A673 (cell line): ENCODE measurements at regions of chr12 and their contacts with region 1.

Region 1: DNA sequence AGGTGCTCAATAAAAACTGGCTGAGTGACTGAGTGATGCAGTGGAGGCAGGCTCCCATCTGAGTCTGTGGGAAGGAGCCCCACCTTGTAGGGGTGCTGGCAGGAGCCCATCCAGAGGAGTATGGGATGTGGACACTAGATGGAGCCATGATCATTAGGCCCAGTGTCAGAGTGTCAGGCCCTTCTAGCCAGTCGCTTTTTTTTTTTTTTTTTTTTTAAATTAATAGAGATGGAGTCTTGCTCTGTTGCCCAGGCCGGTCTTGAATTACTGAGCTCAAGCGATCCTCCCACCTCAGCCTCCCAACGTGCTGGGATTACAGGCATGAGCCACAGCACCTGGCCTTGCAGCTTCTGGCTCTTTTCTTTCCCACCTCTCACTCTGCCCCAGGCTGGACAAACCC is 11.5 kb downstream of the RITA1 start:
- DNase-seq: peak; percentile 71
- H3K4me3 ChIP-seq: no peak overlapping the region
- H3K27ac ChIP-seq: no peak overlapping the region
- H3K4me1 ChIP-seq: no peaks in the 10 kb centered on the region
- H3K27me3 ChIP-seq: no peaks in the 10 kb centered on the region
- CTCF ChIP-seq: peak; percentile 64

Region 2: DNA sequence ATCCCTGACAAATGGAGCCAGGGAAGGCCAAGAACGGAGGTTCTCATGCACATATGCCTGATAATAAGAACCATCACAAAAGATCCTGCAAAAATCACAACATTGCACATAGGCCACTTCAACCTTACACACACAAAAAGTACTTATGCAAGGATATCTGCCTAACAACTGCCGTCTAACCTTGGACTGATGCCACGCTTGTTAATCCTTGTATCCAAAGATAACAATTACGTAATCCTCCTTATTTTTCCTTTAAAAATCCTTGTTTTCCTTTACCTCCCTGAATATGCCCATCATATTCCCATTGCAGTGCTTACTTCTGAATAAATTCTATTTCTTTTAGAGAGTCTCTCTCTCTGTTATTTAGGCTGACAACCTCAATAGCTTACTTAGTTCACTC is 1243.5 kb before region 1 on chr12:
- CTCF ChIA-PET with region 1: no interaction called
- POLR2A ChIA-PET with region 1: no interaction called
- intact Hi-C with region 1: no loop called
- DNase-seq: no peak
- H3K4me3 ChIP-seq: no peak overlapping the region
- H3K27ac ChIP-seq: no peak overlapping the region
- H3K4me1 ChIP-seq: no peaks in the 10 kb centered on the region
- H3K27me3 ChIP-seq: no peaks in the 10 kb centered on the region
- CTCF ChIP-seq: no peak

Region 3: GRCh38 chr12:113221181-113221997 is 24.4 kb after region 1 on chr12 and contains the start of gene TPCN1:
- CTCF ChIA-PET with region 1: no interaction called
- POLR2A ChIA-PET with region 1: interaction called, 15 read pairs
- intact Hi-C with region 1: no loop called
- DNase-seq: peak; percentile 100
- H3K4me3 ChIP-seq: peak within 1 kb of the TSS; percentile 79
- H3K27ac ChIP-seq: peak within 1 kb of the TSS; percentile 76
- H3K4me1 ChIP-seq: peaks cover 15% of the 10 kb centered on the region
- H3K27me3 ChIP-seq: no peaks in the 10 kb centered on the region
- CTCF ChIP-seq: no peak
- total RNA-seq, gene TPCN1: 18.8 and 25.8 TPM in 2 replicates

Region 4: DNA sequence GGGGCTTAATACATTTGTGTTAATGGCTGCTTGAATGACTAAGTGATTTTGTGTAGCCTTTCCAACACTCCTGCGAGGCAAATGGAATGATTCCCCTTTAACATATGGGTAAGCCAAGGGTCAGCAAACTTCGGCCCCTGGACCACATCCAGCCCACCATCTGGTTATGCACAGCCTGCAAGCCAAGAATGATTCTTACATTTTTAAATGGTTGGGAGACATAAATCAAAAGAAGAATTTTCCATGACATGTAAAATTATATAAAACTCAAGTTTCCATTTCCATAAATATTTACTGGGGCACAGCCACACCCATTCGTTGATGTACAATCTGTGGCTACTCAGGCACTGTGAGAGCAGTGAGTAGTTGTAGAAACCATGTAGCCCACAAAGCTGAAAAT is 128.9 kb after region 1 on chr12:
- CTCF ChIA-PET with region 1: no interaction called
- POLR2A ChIA-PET with region 1: no interaction called
- intact Hi-C with region 1: loop called (anchors 10 kb)
- DNase-seq: no peak
- H3K4me3 ChIP-seq: no peak overlapping the region
- H3K27ac ChIP-seq: no peak overlapping the region
- H3K4me1 ChIP-seq: no peaks in the 10 kb centered on the region
- H3K27me3 ChIP-seq: no peaks in the 10 kb centered on the region
- CTCF ChIP-seq: no peak

Region 5: DNA sequence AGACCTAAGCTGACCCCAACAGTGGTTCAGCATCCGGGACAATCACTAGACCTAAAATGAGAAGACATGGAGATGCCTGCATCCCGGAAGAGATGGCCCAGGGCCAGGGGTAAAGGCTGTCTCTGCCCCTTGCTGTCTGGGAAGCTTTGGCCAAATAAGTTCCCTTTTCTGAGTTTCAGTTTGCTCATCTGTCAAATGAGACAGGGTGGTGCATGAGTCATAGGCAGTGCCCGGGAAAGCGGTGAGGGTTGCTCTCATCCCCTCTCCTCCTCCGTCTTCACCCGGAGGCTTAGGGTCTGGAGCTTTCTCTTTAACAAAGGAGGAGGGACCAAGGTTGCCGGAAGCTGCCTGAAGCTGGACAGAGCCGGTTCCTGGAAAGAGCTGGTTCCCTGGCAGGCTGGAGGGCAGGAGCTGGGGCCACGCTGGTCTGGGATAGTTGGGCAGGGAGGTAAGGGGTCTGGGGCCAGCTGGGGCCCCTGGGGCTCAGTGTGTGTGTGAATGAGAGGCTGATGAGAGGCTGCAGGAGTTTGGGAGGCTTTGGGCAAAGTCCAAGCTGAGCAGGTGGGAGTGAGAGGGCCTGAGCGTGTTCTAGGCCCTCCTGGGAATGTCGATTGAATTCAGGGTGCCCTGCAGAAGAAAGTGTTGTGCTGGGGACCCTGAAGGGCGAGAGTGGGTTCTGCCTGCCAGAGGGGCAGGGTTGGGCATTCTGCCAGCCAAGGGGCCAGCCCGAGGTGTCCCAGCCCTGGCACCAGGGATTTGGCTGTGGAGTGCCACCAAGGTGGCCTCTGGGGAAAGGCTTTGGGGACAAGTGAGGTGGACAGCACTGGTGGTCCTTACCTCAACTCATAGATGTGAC is 225.3 kb after region 1 on chr12 and contains the start of gene SDSL:
- CTCF ChIA-PET with region 1: interaction called, 6 read pairs
- POLR2A ChIA-PET with region 1: no interaction called
- intact Hi-C with region 1: loop called (anchors 1 kb)
- DNase-seq: peak; percentile 54
- H3K4me3 ChIP-seq: peak within 1 kb of the TSS; percentile 26
- H3K27ac ChIP-seq: no peak within 1 kb of the TSS
- H3K4me1 ChIP-seq: no peaks in the 10 kb centered on the region
- H3K27me3 ChIP-seq: no peaks in the 10 kb centered on the region
- CTCF ChIP-seq: no peak
- total RNA-seq, gene SDSL: 0.37 and 1.2 TPM in 2 replicates